PC-3 (cell line): ENCODE measurements at regions of chr5 and their contacts with region 1.

Region 1: GRCh38 chr5:146049014-146049703 is 56.2 kb downstream of the PLAC8L1 start:
- DNase-seq: peak; percentile 92
- ATAC-seq: peak; percentile 75
- H3K4me3 ChIP-seq: no peak overlapping the region
- H3K27ac ChIP-seq: no peak overlapping the region
- H3K4me1 ChIP-seq: peaks cover 20% of the 10 kb centered on the region; the same call in 1 of the 2 replicates
- H3K27me3 ChIP-seq: no peaks in the 10 kb centered on the region
- CTCF ChIP-seq: peak; percentile 96

Region 2: DNA sequence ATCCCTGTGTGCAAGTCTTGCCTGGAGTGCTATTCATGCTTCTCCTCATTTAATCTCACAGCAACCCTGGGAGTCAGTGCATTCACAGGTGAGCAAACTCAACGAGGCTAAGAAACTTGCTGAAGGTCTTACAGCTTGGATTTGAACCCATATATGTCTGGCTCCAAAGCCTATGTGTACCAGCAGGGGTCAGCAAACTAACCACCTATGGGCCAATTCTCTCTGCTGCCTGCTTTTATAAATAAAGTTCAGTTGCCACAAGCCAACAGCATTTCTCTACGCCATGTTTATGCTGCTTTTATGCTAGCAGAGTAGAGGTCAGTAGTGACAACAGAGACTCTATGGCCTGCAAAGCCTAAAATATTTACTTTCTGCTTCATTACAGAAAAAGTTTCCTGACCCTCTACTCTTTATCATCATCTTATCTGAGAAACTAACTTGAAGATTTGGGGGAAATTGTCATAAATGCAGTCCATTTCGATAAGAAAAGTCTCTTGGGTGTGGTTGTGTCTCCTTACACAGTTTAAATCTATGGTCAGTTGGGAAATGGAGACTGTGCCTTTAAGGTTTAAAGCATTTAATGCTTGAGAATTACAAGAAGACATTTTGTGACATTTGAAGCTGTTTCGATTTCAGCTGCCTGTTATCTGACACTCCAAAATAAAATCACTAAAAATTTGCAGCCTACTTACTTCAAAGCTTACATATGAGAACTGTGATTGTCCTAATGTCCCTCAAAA is 351.7 kb before region 1 on chr5:
- CTCF ChIA-PET with region 1: no interaction called
- POLR2A ChIA-PET with region 1: no interaction called
- intact Hi-C with region 1: loop called (anchors 1 kb)
- DNase-seq: peak; percentile 60
- ATAC-seq: peak; percentile 63
- H3K4me3 ChIP-seq: no peak overlapping the region
- H3K27ac ChIP-seq: no peak overlapping the region
- H3K4me1 ChIP-seq: no peaks in the 10 kb centered on the region
- H3K27me3 ChIP-seq: no peaks in the 10 kb centered on the region
- CTCF ChIP-seq: peak; percentile 69

Region 3: GRCh38 chr5:145834917-145835847 is 214.0 kb before region 1 on chr5 and contains the start of gene PRELID2:
- CTCF ChIA-PET with region 1: no interaction called
- POLR2A ChIA-PET with region 1: interaction called, 5 read pairs
- intact Hi-C with region 1: loop called (anchors 1 kb)
- DNase-seq: peak; percentile 88
- ATAC-seq: peak; percentile 84
- H3K4me3 ChIP-seq: peak within 1 kb of the TSS; percentile 76
- H3K27ac ChIP-seq: peak within 1 kb of the TSS; percentile 27
- H3K4me1 ChIP-seq: peaks cover 12% of the 10 kb centered on the region
- H3K27me3 ChIP-seq: no peaks in the 10 kb centered on the region
- CTCF ChIP-seq: peak; percentile 22; the same call in 1 of the 2 replicates
- total RNA-seq, gene PRELID2: 23.7 and 33.2 TPM in 2 replicates

Region 4: DNA sequence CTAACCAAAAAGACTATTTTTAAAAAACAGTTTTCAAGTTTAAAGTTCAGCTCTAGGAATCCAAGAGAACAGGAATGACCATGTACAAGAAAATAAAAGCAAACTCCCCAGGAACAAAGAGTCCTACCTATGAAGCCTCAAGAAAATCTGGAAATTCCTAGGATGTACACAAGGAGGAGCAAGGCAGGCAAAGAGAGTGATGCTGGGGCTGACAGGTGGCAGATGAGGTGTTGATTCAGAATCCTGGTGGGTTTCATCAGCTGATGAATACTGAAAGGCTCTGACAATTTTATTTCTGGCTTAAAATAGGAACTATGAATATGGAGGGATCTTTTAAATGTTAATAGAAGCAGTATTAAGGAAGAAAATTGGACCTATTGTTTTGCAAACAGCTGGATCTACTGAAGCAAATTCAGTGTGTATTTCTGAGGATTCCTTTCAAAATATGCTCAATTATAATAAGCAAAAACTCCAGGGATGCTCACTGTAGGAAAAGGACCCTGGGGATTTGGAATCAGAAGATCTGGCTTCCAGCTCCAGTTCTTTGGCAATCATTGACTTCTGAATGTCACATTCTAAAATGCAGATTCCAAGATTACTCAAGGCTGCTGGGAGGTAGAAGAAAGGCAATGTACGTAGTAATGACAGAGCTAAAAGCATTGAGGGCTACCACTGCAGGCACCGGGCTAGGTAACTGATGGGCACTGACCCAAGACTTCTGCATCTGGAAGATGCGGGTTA is 140.8 kb before region 1 on chr5:
- CTCF ChIA-PET with region 1: no interaction called
- POLR2A ChIA-PET with region 1: no interaction called
- intact Hi-C with region 1: loop called (anchors 1 kb)
- DNase-seq: peak; percentile 12
- ATAC-seq: peak; percentile 50
- H3K4me3 ChIP-seq: no peak overlapping the region
- H3K27ac ChIP-seq: no peak overlapping the region
- H3K4me1 ChIP-seq: no peaks in the 10 kb centered on the region
- H3K27me3 ChIP-seq: no peaks in the 10 kb centered on the region
- CTCF ChIP-seq: peak; percentile 55

Region 5: DNA sequence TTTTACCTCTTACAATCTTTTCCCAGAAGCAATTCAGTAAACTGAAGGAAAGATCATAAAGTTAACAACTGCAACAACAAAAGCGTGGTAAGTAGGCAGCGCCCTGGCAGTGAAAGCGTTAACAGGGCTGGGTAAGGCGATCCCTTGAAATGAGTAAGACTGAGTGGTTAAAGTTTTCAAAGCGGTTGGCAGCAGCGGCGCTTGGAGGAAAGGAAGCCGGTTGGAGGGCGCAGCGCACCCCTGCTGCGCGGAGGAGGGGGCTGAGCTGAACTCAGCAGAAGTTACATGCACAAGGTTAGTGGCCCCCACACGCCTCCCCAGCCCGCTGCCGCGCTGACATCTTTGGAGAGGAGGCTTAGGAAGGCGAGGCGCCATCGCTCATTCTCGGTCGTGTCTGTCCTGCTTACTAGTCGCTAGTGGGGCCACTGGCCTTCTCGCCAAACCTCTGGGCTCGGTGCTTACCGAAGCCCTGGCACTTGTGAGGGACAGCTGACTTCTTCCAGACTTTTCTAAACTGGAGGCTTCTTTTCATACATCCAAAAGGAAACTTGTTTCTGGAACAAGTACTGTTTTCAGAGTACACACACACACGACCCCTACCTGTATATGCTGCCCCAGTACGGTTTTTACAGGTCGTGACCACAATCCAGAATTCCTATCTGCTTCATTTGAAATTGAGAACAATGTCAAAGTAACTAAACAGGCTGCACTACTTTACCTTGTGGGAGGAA is 112.6 kb before region 1 on chr5 and contains the start of gene SH3RF2:
- CTCF ChIA-PET with region 1: no interaction called
- POLR2A ChIA-PET with region 1: no interaction called
- intact Hi-C with region 1: loop called (anchors 1 kb)
- DNase-seq: peak; percentile 75
- ATAC-seq: peak; percentile 79
- H3K4me3 ChIP-seq: peak within 1 kb of the TSS; percentile 86
- H3K27ac ChIP-seq: peak within 1 kb of the TSS; percentile 70
- H3K4me1 ChIP-seq: peaks cover 40% of the 10 kb centered on the region
- H3K27me3 ChIP-seq: no peaks in the 10 kb centered on the region
- CTCF ChIP-seq: no peak
- total RNA-seq, gene SH3RF2: 5.9 and 6.2 TPM in 2 replicates

Region 6: DNA sequence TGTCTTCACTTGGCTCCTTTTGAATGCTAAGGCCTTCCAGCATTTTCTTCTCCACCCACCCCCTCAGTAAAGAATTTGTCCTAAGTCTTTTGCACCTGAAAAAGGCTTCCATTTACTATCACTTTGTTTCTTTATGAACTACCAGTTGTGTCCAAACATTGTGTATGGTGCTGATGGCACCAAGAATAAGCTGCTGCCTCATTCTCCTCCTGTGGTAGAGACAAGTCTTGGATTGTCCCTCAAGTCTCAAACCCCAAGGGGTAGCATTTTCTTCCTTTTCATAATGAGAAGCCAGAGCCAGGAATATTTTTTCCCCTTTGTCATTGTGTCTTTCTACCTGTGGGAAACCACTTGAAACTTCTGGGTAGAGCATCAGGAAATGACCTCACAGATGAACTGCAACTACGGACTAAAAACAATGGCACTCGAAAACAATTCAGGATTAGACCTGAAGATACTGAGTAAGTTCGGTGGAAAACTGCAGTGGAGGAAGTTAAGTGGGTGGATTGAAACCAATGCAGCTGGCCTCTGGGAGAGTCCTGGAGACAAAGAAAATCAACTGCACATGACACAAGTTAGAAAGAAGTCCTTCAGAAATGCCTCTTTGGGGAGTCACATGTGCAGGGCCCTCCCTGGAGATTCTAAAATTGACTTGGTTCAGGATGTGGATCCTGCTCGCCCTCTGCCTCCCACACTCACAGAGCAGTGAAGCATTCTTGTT is 32.2 kb before region 1 on chr5:
- CTCF ChIA-PET with region 1: no interaction called
- POLR2A ChIA-PET with region 1: no interaction called
- intact Hi-C with region 1: no loop called
- DNase-seq: no peak
- ATAC-seq: no peak
- H3K4me3 ChIP-seq: no peak overlapping the region
- H3K27ac ChIP-seq: no peak overlapping the region
- H3K4me1 ChIP-seq: peaks cover 10% of the 10 kb centered on the region; the same call in 1 of the 2 replicates
- H3K27me3 ChIP-seq: no peaks in the 10 kb centered on the region
- CTCF ChIP-seq: no peak